PC-3 (cell line): ENCODE measurements at regions of chr5 and their contacts with region 1.

Region 1: GRCh38 chr5:173331956-173332479 is 3.8 kb upstream of the STC2 start:
- DNase-seq: peak; percentile 95
- ATAC-seq: peak; percentile 14
- H3K4me3 ChIP-seq: no peak overlapping the region
- H3K27ac ChIP-seq: no peak overlapping the region
- H3K4me1 ChIP-seq: peaks cover 41% of the 10 kb centered on the region
- H3K27me3 ChIP-seq: no peaks in the 10 kb centered on the region
- CTCF ChIP-seq: peak; percentile 97

Region 2: DNA sequence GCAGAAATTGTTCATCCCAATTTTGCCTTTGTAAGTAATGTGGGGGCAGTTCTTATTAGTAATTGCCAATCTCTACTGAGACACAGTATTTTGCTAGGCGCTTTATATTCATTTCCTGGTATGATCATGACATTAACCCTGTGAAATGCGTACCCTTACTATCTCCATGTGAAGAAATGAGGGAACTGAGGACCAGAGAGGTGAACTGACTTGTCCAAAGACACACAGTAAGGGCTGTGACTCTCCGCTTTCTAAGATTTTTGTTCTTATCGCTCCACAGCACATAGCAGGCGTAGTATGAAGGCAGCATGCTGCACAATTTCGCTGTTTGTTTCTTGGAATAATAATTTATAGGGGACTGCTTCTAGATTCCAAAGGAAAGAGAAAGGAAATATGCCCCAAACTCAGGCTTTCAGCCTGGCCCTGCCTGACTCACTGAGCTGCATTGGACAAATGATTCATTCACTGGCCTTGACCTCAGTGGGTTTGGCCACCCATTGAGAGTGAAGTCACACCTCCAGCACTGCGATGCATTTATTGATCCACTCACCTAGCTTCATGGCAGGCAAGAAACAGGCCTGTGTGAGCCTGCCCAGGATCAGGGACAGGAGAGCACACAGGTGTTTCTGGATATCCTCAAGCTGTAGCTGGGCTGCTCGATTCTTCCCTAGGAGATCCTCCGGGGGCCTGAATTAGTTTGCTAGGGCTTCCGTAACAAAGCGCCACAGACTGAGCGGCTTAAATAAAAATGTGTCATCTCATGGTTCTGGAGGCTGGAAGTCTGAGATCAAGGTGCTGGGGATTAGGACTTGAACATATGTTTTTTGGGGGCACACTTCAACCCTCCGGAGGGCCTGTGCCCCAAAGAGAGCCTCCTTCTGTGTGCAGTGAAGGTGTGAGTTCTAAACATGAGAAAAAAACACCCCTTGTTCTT is 553.9 kb before region 1 on chr5:
- CTCF ChIA-PET with region 1: no interaction called
- POLR2A ChIA-PET with region 1: interaction called, 10 read pairs
- intact Hi-C with region 1: no loop called
- DNase-seq: peak; percentile 92
- ATAC-seq: peak; percentile 70
- H3K4me3 ChIP-seq: peak overlapping the region; percentile 50
- H3K27ac ChIP-seq: peak overlapping the region; percentile 95
- H3K4me1 ChIP-seq: peaks cover 64% of the 10 kb centered on the region
- H3K27me3 ChIP-seq: no peaks in the 10 kb centered on the region
- CTCF ChIP-seq: no peak

Region 3: DNA sequence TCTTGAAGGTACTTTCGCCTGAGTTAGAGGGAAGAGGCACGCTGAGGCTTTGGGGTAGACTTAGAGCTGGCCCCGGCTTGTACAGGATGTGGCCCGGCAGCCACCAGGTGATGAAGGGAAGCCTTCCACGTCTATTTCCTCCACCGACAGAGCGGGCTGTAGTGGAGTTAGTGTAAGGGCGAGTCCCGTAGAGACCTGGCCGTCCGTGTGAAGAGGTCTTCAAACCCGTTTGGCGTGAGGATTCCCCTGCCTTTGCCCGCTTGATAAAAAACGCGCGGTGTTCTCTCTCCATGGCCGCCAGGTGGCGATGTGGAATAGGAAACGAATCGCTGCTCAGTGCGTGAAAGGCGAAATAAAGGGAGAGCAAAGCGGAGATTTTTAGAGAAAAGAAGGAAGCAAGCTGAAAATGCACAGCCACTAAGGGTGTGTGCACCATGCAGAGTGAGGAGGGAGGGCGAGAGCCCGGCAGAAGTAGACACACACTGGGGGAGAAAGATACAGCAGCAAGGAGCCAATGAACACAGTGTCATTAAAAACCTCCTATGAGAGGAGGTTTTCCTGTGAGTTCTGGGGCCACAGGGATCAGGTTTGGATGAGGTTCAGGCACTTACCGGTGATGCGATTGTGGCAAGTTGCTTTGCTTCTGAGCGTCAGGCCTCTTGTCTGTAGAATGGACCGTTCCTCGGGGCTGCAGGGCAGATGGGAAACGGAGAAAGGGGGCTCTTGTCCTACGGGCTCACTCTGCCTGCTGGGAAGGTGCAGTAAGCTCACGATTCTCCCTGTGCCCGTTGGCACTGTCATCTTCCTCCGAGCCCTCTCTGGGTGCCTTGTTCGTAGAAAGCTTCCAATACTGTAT is 38.0 kb before region 1 on chr5:
- CTCF ChIA-PET with region 1: interaction called, 9 read pairs
- POLR2A ChIA-PET with region 1: no interaction called
- intact Hi-C with region 1: loop called (anchors 1 kb)
- DNase-seq: peak; percentile 91
- ATAC-seq: peak; percentile 83
- H3K4me3 ChIP-seq: peak overlapping the region; percentile 49; the same call in 1 of the 2 replicates
- H3K27ac ChIP-seq: no peak overlapping the region
- H3K4me1 ChIP-seq: peaks cover 6% of the 10 kb centered on the region; the same call in 1 of the 2 replicates
- H3K27me3 ChIP-seq: no peaks in the 10 kb centered on the region
- CTCF ChIP-seq: peak; percentile 94

Region 4: DNA sequence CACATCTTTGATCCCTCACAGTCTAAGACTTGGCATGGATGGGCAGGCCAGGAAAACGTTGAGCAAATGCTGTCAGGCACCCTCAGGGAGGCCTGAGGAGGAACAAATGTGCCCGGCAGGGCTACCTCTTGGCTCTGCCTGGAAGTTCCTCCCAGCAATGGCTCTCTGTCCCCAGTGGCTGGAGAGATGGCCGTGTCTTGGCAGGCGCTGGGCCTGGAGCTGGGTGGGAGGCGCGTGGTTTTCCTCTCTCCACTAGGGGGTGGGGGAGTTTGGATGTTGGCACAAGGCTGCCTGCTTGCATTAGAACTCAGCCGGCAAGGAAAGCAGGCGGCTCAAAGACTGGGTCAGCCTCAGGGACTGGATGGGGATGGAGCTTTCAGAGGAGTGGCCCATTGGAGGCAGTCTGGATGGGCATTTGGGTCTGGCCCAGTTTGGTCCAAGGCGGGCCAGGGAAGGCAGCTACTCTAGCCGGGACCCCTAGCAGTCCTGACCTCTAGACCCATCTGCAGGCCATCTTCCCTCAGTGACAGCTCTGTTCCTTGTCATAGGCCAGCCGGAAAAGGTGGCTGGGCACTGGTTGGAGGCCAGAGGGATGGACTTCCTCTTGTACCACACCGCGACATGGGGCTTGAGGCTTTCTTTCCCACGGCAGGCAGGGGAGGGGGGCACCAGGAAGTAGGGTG is 64.4 kb after region 1 on chr5:
- CTCF ChIA-PET with region 1: interaction called, 3 read pairs
- POLR2A ChIA-PET with region 1: no interaction called
- intact Hi-C with region 1: loop called (anchors 5 kb)
- DNase-seq: no peak
- ATAC-seq: peak; percentile 24; the same call in 1 of the 2 replicates
- H3K4me3 ChIP-seq: no peak overlapping the region
- H3K27ac ChIP-seq: no peak overlapping the region
- H3K4me1 ChIP-seq: no peaks in the 10 kb centered on the region
- H3K27me3 ChIP-seq: no peaks in the 10 kb centered on the region
- CTCF ChIP-seq: peak; percentile 41; the same call in 1 of the 2 replicates

Region 5: DNA sequence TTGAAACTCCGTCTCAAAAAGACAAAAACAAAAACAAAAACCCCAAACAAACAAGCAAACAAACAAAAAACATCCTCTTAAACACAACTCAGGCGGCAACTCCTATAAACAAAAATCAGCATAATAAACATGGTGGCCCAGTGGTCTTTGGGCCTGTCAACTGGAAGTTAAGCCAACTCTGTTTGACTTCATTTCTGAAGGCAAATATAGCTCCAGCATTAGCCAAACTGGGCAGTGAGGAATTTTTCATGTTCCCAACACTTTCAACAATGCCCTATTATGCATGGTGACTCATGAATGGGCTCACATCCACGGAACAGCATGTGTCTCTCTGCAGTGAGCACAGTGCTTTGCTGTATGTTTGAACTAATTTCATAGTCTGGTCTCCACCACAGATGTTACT is 140.1 kb after region 1 on chr5:
- CTCF ChIA-PET with region 1: no interaction called
- POLR2A ChIA-PET with region 1: interaction called, 6 read pairs
- intact Hi-C with region 1: loop called (anchors 5 kb)
- DNase-seq: peak; percentile 99
- ATAC-seq: peak; percentile 96
- H3K4me3 ChIP-seq: no peak overlapping the region
- H3K27ac ChIP-seq: peak overlapping the region; percentile 88
- H3K4me1 ChIP-seq: peaks cover 23% of the 10 kb centered on the region
- H3K27me3 ChIP-seq: no peaks in the 10 kb centered on the region
- CTCF ChIP-seq: no peak

Region 6: DNA sequence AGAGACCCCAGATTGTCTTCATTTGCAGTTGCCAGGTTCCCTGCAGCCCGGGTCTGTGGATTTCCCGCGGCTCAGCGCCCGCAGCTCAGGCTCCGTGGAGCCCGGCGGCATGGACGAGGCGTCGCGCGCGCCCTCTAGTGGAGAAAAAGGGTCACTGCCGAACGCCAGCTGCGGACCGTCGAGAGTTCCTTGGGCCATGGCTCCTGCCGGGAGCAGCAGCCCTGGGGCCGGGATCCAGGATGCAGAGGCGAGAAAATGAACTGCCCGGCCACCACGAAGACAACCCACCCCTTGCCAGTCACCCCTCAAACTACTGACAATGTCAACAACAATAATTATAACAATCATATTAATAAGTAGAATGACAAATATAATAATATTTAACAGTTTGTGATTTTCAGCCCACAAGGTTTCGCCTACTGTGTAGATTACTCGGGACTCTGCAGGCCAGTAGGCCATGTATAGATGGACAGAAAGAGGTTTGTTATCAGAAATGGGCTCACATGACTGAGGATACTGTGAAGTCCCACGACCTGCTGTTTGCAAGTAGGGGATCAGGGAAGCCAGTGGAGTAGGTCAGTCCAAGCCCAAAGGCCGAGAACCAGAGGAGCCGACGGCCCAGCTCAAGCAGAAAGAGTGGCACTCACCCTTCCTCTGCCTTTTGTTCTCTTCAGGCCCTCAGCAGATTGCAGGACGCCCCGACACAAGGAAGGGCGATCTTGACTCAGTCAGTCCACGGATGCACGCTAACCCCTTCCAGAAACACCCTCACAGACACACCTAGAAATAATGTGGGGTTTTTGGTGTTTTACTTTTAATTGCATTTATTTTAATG is 241.3 kb after region 1 on chr5:
- CTCF ChIA-PET with region 1: interaction called, 4 read pairs
- POLR2A ChIA-PET with region 1: no interaction called
- intact Hi-C with region 1: loop called (anchors 1 kb)
- DNase-seq: peak; percentile 86
- ATAC-seq: peak; percentile 94
- H3K4me3 ChIP-seq: peak overlapping the region; percentile 46; the same call in 1 of the 2 replicates
- H3K27ac ChIP-seq: no peak overlapping the region
- H3K4me1 ChIP-seq: peaks cover 11% of the 10 kb centered on the region
- H3K27me3 ChIP-seq: no peaks in the 10 kb centered on the region
- CTCF ChIP-seq: peak; percentile 97

Region 7: DNA sequence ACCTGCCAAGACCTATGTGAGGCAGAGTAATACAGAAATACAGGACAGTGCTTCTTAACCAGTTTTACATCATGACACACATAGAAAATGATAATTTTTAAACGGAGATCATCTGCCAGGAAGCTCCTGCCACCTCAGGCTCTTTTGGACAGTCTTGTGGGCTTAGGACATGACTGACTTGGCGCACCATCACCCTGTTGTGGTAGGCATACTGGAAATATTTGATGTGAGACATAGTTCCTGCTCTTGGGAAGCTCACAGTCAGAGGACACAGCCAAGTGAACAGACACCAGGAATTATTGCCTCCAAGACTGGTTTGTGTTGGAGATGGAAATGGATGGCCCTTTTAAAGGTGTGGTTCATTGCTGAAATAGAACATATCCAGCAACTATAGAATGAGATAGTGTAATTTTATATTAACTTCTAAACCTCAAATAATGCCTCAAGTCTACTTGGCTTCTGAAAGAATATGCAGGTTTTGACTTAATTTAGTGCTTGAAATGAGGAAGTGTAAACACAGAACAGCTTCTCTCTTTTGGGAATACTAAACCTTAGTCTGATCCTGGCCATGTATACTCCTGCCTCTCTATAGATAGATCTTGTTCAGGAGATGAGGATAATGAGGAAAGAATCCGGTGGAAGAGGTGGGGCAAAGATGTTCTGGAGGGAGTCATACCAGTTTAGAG is 575.8 kb after region 1 on chr5:
- CTCF ChIA-PET with region 1: no interaction called
- POLR2A ChIA-PET with region 1: no interaction called
- intact Hi-C with region 1: loop called (anchors 10 kb)
- DNase-seq: peak; percentile 46
- ATAC-seq: peak; percentile 59
- H3K4me3 ChIP-seq: no peak overlapping the region
- H3K27ac ChIP-seq: no peak overlapping the region
- H3K4me1 ChIP-seq: peaks cover 17% of the 10 kb centered on the region
- H3K27me3 ChIP-seq: no peaks in the 10 kb centered on the region
- CTCF ChIP-seq: no peak